Natural killer cell (primary cell): ENCODE measurements at regions of chr1 and their contacts with region 1.

Region 1: DNA sequence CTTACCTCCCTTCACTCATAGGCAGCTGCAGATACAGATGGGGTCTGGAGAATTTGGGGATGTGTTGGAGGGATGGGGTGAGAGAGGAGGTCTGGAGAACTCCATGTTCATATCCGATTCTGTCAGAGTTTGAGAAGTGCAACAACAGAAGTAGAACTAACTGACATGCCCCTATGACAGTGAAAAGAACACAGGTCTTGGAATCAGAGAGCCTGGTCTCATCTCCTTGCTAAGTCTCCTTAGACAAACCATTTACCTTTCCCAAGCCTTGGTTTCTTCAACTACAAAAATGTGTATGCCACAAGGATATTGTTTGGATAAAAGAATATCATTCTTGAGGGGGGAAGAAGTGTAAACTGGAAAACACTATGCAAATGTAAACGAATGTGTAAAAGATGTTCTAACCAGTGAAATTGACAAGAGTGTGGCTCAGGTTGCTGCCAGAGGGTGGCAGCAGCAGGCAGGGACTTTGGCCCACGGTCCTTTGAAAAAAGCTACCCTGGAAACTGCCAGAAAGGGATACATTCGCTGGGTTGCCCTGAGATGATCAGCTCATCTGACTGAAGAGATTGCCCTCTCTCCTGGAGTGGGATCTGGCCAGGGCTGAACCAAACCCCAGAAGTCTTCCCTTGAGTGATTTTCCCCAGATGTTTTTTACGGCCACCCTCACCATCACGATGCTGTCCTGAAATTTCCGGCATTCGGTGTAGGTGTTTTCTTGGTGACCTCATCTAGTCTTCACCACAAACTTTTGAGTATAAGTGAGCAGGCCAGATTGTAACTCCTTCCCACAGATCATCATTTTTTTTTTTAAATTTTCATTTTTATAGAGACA is 17.0 kb upstream of the CD2 start:
- DNase-seq: peak; percentile 60 to 90
- ATAC-seq: peak; percentile 53 to 58 (median 58)
- H3K4me3 ChIP-seq: no peak overlapping the region
- H3K4me3 Mint-ChIP-seq: peak overlapping the region; percentile 78
- H3K27ac ChIP-seq: peak overlapping the region; percentile 85
- H3K27ac Mint-ChIP-seq: peak overlapping the region; percentile 94 to 97
- H3K4me1 ChIP-seq: peaks cover 51% of the 10 kb centered on the region
- H3K4me1 Mint-ChIP-seq: peaks cover 46% of the 10 kb centered on the region in 2 donors
- H3K27me3 ChIP-seq: no peaks in the 10 kb centered on the region
- H3K27me3 Mint-ChIP-seq: no peaks in the 10 kb centered on the region
- CTCF ChIP-seq: peak; percentile 93

Region 2: DNA sequence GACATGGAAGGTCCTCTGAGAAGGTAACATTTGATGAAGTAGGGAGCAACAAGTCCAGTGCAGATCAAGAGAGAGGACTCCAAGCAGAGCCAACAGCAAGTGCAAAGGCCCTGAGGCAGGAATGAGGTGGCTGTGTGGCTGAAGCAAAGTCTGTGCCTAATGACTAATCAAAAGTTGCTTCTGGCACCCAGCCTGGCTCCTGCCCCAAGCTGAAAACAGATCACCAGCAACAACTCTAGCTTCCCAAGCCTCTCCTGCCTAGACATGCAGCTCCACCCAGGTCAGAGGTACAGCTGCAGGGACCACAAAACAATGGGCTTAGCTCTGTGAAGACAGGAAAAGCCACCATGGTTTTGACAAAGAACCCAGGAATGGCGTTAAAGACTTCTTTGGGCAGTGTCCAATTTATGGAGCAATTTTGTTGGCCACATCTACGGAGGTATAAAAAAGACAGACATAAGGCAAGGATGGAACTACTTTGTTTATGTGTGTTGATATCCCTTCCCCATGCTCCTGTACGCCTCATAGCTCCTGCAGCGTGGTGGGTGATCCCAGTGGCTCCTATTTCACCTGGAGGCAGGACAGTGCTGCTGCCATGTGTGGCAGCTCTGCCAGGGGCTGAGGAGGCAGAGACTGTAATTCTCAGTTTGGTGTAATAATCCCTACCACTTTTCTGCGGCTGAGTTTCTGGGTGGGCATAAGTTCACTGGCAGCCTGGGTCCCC is 43.3 kb before region 1 on chr1:
- intact Hi-C with region 1: no loop called
- DNase-seq: no peak
- ATAC-seq: no peak
- H3K4me3 ChIP-seq: no peak overlapping the region
- H3K4me3 Mint-ChIP-seq: no peak overlapping the region
- H3K27ac ChIP-seq: no peak overlapping the region
- H3K27ac Mint-ChIP-seq: no peak overlapping the region
- H3K4me1 ChIP-seq: no peaks in the 10 kb centered on the region
- H3K4me1 Mint-ChIP-seq: no peaks in the 10 kb centered on the region
- H3K27me3 ChIP-seq: no peaks in the 10 kb centered on the region
- H3K27me3 Mint-ChIP-seq: peaks cover 4 to 8% of the 10 kb centered on the region in 2 donors
- CTCF ChIP-seq: no peak

Region 3: DNA sequence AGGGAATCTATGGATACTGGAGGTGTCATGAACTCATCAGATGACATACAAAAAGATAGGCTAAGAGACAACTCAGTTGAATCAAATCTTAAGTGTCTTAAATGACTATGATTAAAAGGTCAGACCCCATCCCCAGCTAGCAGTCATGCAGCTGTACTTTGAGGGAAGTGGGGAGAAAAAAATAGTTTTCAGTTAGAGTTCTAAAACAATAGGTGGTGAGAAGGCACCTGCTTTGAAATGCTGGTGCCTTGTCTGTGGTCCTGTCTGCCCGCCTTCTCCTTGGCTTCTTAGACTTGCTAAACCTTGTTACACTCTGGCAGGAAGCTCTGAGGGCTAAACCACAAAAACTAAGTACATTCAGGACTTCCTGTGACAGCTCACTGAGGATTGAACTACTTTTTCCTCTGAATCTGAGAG is 32.3 kb after region 1 on chr1:
- intact Hi-C with region 1: loop called (anchors 1 kb)
- DNase-seq: peak in 1 of 2 donors; percentile 92
- ATAC-seq: peak; percentile 73 to 91 (median 80)
- H3K4me3 ChIP-seq: no peak overlapping the region
- H3K4me3 Mint-ChIP-seq: peak overlapping the region; percentile 81
- H3K27ac ChIP-seq: peak overlapping the region; percentile 78
- H3K27ac Mint-ChIP-seq: peak overlapping the region; percentile 93 to 94
- H3K4me1 ChIP-seq: peaks cover 69% of the 10 kb centered on the region
- H3K4me1 Mint-ChIP-seq: peaks cover 59 to 83% of the 10 kb centered on the region in 2 donors
- H3K27me3 ChIP-seq: no peaks in the 10 kb centered on the region
- H3K27me3 Mint-ChIP-seq: no peaks in the 10 kb centered on the region
- CTCF ChIP-seq: no peak

Region 4: DNA sequence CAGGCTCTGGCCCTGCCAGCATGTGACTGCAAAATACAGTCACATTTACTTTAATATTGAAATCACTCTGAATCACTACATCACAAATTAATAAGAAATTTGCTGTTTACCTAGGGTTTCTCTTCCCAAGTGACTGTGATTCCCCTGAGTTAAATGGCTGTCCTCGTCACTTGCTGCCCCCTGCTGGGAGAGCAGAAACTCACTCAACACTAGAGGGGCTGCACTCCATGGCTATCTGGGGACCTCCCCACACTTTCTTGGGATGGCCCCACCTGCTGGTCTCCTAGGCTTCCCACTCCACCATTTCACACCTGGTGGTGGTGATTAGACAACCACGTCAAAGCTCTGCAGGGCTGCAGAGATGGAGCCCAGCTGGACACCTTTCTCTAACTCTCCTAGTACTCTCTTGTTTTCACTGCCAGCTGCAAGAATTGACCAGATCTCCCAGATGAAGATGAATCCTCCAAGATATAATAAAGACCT is 80.4 kb after region 1 on chr1:
- intact Hi-C with region 1: loop called (anchors 1 kb)
- DNase-seq: peak; percentile 54 to 88
- ATAC-seq: peak; percentile 67 to 76 (median 71)
- H3K4me3 ChIP-seq: no peak overlapping the region
- H3K4me3 Mint-ChIP-seq: peak overlapping the region; percentile 67
- H3K27ac ChIP-seq: no peak overlapping the region
- H3K27ac Mint-ChIP-seq: peak overlapping the region; percentile 48 to 90
- H3K4me1 ChIP-seq: peaks cover 29% of the 10 kb centered on the region
- H3K4me1 Mint-ChIP-seq: peaks cover 36 to 42% of the 10 kb centered on the region in 2 donors
- H3K27me3 ChIP-seq: no peaks in the 10 kb centered on the region
- H3K27me3 Mint-ChIP-seq: no peaks in the 10 kb centered on the region
- CTCF ChIP-seq: peak; percentile 78

Region 5: GRCh38 chr1:116934586-116935207 is 197.5 kb after region 1 on chr1:
- intact Hi-C with region 1: loop called (anchors 5 kb)
- DNase-seq: peak in 1 of 2 donors; percentile 61
- ATAC-seq: peak in 2 of 3 donors; percentile 47 to 53
- H3K4me3 ChIP-seq: no peak overlapping the region
- H3K4me3 Mint-ChIP-seq: peak overlapping the region; percentile 43
- H3K27ac ChIP-seq: no peak overlapping the region
- H3K27ac Mint-ChIP-seq: peak overlapping the region in 1 of 2 donors; percentile 74
- H3K4me1 ChIP-seq: peaks cover 4% of the 10 kb centered on the region
- H3K4me1 Mint-ChIP-seq: peaks cover 14 to 17% of the 10 kb centered on the region in 2 donors
- H3K27me3 ChIP-seq: no peaks in the 10 kb centered on the region
- H3K27me3 Mint-ChIP-seq: peaks cover 0 to 1% of the 10 kb centered on the region in 2 donors
- CTCF ChIP-seq: peak; percentile 17

Region 6: GRCh38 chr1:117059678-117060440 is 322.6 kb after region 1 on chr1 and contains the start of gene TTF2:
- intact Hi-C with region 1: loop called (anchors 1 kb)
- DNase-seq: peak; percentile 90 to 98
- ATAC-seq: peak; percentile 92 to 98 (median 94)
- H3K4me3 ChIP-seq: peak within 1 kb of the TSS; percentile 58
- H3K4me3 Mint-ChIP-seq: no peak within 1 kb of the TSS
- H3K27ac ChIP-seq: peak within 1 kb of the TSS; percentile 54
- H3K27ac Mint-ChIP-seq: no peak within 1 kb of the TSS
- H3K4me1 ChIP-seq: peaks cover 16% of the 10 kb centered on the region
- H3K4me1 Mint-ChIP-seq: peaks cover 9 to 16% of the 10 kb centered on the region in 2 donors
- H3K27me3 ChIP-seq: no peaks in the 10 kb centered on the region
- H3K27me3 Mint-ChIP-seq: no peaks in the 10 kb centered on the region
- CTCF ChIP-seq: no peak
- total RNA-seq, gene TTF2: 17.9 to 24.7 (median 23.9) TPM